Left cardiac atrium (tissue), 4 donors: ENCODE measurements at regions of chr9 and their contacts with region 1.

Region 1: GRCh38 chr9:68515326-68515901 is 25.3 kb downstream of the TMEM252 start:
- DNase-seq: no peak
- ATAC-seq: peak in 1 of 2 donors; percentile 57

Region 2: DNA sequence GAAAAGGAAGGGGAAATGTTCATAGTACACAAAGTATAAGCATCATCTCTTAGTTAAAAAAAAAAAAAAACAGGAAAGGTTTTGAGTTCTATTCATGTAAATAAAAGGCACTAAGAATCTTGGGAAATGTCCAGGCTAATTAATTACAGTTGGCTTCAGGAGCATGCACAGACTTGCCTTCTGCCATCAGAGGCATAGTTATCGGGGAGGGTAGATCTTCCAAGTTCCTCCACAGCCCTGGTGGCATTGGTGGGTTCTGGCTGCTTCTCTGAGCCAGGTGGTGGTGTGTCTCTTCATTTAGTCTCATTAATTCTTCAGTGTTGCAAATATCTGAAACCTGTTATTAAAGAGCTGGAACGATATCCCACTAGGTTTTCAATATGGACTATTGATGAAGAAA is 60.0 kb before region 1 on chr9:
- intact Hi-C with region 1: no loop called
- DNase-seq: no peak
- ATAC-seq: no peak

Region 3: GRCh38 chr9:68492806-68493205 is 22.6 kb before region 1 on chr9:
- intact Hi-C with region 1: no loop called
- DNase-seq: no peak
- ATAC-seq: no peak

Region 4: DNA sequence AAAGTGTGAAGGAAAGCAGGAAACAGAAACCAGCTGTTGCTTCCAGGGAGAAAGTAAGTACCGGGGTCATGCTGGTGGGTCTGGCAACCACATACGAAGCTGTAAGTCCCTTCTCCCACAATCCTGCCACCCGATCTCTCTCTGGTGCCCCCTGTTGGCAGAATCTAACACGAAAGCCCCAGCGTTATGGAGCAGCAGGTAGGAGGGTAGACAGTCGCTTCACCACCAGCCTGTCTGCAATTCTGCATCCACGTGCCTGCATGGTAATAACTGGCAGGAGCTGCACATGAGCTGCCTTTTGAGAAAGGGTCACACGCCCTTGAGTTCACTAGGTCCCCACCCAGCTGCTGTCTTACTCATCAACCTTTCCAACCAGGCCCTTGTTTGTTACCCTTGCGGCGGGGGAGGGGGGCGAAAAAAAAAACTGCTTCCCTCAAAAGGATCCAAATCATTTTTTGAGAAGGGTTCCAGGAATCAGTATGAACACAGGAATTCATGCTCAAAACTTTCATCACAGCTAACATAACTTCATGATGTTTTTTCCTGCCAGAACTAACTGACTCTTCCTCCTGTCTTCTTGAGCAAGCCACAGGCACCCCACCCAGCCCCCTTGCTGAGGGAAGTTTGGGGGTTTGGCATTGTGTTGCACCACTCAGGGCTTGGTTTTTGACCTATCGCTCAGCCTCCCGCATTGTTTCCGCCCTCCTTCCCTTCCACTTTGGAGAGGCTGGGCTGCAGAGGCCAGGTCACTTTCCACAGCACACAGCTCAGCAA is 44.8 kb after region 1 on chr9:
- intact Hi-C with region 1: loop called in 1 of 2 experiments (anchors 10 kb)
- DNase-seq: peak; percentile 59
- ATAC-seq: peak; percentile 51 to 74

Region 5: GRCh38 chr9:68653141-68653595 is 137.8 kb after region 1 on chr9:
- intact Hi-C with region 1: no loop called
- DNase-seq: no peak
- ATAC-seq: no peak

Region 6: DNA sequence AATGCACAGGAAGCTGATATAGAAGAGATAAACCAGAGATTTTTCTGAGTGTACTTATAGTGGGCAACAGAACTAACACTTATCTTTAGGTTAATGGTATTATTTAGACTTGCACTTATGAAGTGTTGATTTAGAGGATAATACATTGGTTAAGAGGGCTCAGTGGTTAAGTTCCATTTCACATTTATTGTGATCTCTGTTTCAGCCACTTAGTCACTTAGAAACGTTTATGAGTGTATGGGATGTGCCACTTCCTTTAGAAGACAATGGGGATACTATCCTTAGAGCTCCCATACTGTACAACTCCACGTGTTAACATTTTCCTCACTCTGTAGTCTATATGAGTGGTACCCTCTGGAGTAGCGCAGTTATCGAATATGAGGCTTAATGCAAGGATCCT is 247.2 kb after region 1 on chr9:
- intact Hi-C with region 1: no loop called
- DNase-seq: no peak
- ATAC-seq: no peak